ENCODE measurements at regions of chr9 and their contacts with region 1.

Region 1: DNA sequence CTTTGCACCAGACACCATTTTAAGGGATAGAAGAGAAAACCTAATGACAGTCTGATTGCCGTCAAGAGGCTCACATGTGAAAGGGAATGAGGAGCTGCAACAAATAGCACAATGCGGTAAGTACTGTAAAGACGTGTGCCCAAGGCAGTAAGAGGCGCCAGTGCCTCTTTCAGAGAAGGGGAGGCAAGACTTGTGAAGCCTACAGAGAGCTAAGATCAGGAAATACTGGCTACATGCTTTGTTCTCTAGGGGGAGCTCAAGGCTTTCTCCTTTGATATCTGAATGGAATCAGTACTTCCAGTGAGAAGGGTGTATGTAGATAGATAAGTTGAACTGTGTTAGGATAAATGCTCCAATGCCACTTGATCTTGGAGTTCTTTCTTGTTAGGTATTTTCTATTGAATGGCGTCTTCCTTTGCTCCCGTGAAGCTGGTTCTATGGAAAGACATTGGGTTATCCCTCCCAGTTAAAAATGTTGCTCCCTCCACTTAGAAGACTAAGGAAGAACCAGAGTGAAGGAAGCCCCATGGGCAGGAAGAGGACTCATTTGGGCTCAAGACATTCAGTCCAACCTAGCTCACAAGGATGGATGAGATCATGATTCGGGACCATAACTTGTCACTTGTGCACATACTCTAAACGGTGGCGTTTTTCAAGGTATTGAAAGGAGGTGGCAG is 23.5 kb upstream of the ALDOB start:
- DNase-seq: peak; percentile 58 to 81
- ATAC-seq: peak; percentile 97 to 99
- H3K4me3 ChIP-seq: no peak overlapping the region
- H3K27ac ChIP-seq: no peak overlapping the region
- H3K4me1 ChIP-seq: no peaks in the 10 kb centered on the region
- CTCF ChIP-seq: peak; percentile 81
- EP300 ChIP-seq: no peak
- POLR2A ChIP-seq: no peak
- RAD21 ChIP-seq: peak; percentile 78 to 84

Region 2: GRCh38 chr9:101421653-101422065 is 37.4 kb before region 1 on chr9:
- CTCF ChIA-PET with region 1: no interaction called
- POLR2A ChIA-PET with region 1: no interaction called
- DNase-seq: peak in 1 of 2 experiments; percentile 12
- ATAC-seq: peak in 1 of 2 experiments; percentile 42; a peak in 1 of 6 replicates
- H3K4me3 ChIP-seq: no peak overlapping the region
- H3K27ac ChIP-seq: no peak overlapping the region
- H3K4me1 ChIP-seq: no peaks in the 10 kb centered on the region
- CTCF ChIP-seq: no peak
- EP300 ChIP-seq: no peak
- POLR2A ChIP-seq: no peak
- RAD21 ChIP-seq: no peak

Region 3: GRCh38 chr9:101486693-101487442 is 27.8 kb after region 1 on chr9:
- CTCF ChIA-PET with region 1: interaction called, 13 read pairs
- POLR2A ChIA-PET with region 1: interaction called, 3 read pairs
- DNase-seq: peak; percentile 73 to 81
- ATAC-seq: peak; percentile 93 to 96
- H3K4me3 ChIP-seq: peak overlapping the region; percentile 73
- H3K27ac ChIP-seq: peak overlapping the region; percentile 86 to 97
- H3K4me1 ChIP-seq: peaks cover 10% of the 10 kb centered on the region; the same call in 2 of the 3 replicates
- CTCF ChIP-seq: peak; percentile 39
- EP300 ChIP-seq: no peak
- POLR2A ChIP-seq: peak; percentile 62
- RAD21 ChIP-seq: peak; percentile 39 to 53; a peak in 4 of 5 replicates

Region 4: GRCh38 chr9:101524371-101524770 is 65.3 kb after region 1 on chr9:
- CTCF ChIA-PET with region 1: interaction called, 178 read pairs
- POLR2A ChIA-PET with region 1: no interaction called
- DNase-seq: no peak
- ATAC-seq: no peak
- H3K4me3 ChIP-seq: no peak overlapping the region
- H3K27ac ChIP-seq: no peak overlapping the region
- H3K4me1 ChIP-seq: no peaks in the 10 kb centered on the region
- CTCF ChIP-seq: no peak
- EP300 ChIP-seq: no peak
- POLR2A ChIP-seq: no peak
- RAD21 ChIP-seq: no peak

Region 5: DNA sequence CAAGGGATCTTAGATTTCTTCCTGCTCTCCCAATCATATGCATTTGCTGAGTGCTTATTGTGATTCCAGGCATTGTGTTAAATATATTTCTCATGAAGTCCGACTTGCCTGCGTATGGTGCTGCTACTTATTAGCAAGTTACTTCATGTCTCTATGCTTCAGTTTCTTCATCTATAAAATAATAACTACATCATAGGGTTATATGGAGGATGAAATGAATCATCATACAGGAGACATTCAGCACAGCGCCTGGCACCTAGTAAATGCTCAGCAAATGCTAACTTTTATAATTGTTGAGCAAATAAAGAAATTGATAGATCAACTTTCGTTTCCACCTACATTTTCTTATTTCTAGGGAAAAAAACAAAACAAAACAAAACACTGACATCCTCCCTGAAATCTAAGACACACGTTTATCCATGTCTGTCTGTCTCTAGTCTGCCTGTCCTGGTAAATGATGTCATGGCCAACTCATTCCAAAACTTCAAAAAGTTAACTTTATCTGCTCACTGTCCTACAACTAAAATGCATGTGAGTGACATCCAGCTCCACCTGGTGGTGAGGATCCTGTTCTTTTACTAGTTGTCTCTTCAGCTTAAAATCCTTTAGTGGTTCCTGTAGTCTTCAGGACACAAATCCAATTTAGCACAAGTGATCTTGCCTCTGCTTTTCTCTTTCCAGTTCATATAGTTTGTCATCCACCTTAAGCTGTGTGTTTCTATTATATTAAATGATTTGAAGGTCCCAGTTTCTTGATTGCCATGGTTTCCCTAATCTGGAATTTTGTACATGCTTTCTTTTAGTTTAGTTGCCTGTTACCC is 108.0 kb after region 1 on chr9:
- CTCF ChIA-PET with region 1: interaction called, 12 read pairs
- POLR2A ChIA-PET with region 1: no interaction called
- DNase-seq: peak; percentile 36 to 57
- ATAC-seq: peak; percentile 82 to 84
- H3K4me3 ChIP-seq: no peak overlapping the region
- H3K27ac ChIP-seq: no peak overlapping the region
- H3K4me1 ChIP-seq: no peaks in the 10 kb centered on the region
- CTCF ChIP-seq: peak; percentile 57
- EP300 ChIP-seq: no peak
- POLR2A ChIP-seq: no peak
- RAD21 ChIP-seq: peak in 1 of 2 experiments; percentile 26; a peak in 3 of 5 replicates

Region 6: GRCh38 chr9:101618698-101619097 is 159.6 kb after region 1 on chr9:
- CTCF ChIA-PET with region 1: no interaction called
- POLR2A ChIA-PET with region 1: no interaction called
- DNase-seq: no peak
- ATAC-seq: no peak
- H3K4me3 ChIP-seq: no peak overlapping the region
- H3K27ac ChIP-seq: no peak overlapping the region
- H3K4me1 ChIP-seq: no peaks in the 10 kb centered on the region
- CTCF ChIP-seq: no peak
- EP300 ChIP-seq: no peak
- POLR2A ChIP-seq: no peak
- RAD21 ChIP-seq: no peak

Region 7: DNA sequence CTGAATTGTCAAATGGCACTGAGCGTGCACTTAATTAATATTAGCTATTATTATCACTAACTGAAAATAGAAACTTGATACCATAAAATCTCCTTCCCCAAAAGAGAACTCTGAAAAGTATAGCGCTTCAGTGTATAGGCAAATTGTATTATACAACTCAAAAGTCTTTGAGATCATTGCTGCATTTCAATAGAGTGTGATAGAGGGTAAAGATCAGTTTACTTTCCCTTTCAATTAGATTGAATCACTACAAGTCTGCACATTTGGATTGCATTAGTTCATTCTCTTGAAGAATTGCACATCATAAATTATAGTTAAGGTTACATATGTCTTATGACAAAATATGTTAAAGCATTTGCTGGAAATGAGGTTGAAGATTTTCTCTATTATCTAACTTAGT is 292.8 kb after region 1 on chr9:
- CTCF ChIA-PET with region 1: no interaction called
- POLR2A ChIA-PET with region 1: no interaction called
- DNase-seq: no peak
- ATAC-seq: no peak
- H3K4me3 ChIP-seq: no peak overlapping the region
- H3K27ac ChIP-seq: no peak overlapping the region
- H3K4me1 ChIP-seq: no peaks in the 10 kb centered on the region
- CTCF ChIP-seq: no peak
- EP300 ChIP-seq: no peak
- POLR2A ChIP-seq: no peak
- RAD21 ChIP-seq: no peak

Measured in A549 (cell line).